ENCODE measurements at regions of chr6 and their contacts with region 1.

Region 1: GRCh38 chr6:106325336-106326178 is at the start of gene ATG5:
- DNase-seq: peak; percentile 98 to 100 (median 100)
- ATAC-seq: peak; percentile 92
- H3K4me3 ChIP-seq: peak within 1 kb of the TSS; percentile 92
- H3K4me3 Mint-ChIP-seq: peak within 1 kb of the TSS; percentile 99
- H3K27ac ChIP-seq: peak within 1 kb of the TSS; percentile 85 to 91
- H3K27ac Mint-ChIP-seq: peak within 1 kb of the TSS; percentile 96
- H3K4me1 ChIP-seq: peaks cover 22% of the 10 kb centered on the region
- H3K4me1 Mint-ChIP-seq: peaks cover 50% of the 10 kb centered on the region
- H3K27me3 ChIP-seq: peaks cover 0 to 12% of the 10 kb centered on the region in 2 experiments
- H3K27me3 Mint-ChIP-seq: peaks cover 19% of the 10 kb centered on the region
- CTCF ChIP-seq: no peak
- total RNA-seq, gene ATG5: 19.4 to 23.2 TPM

Region 2: GRCh38 chr6:105992315-105992961 is 333.1 kb before region 1 on chr6:
- CTCF ChIA-PET with region 1: no interaction called
- POLR2A ChIA-PET with region 1: interaction called, 12 read pairs
- intact Hi-C with region 1: loop called in 1 of 2 experiments (anchors 2 kb)
- DNase-seq: peak; percentile 76 to 96 (median 86)
- ATAC-seq: peak; percentile 89
- H3K4me3 ChIP-seq: peak overlapping the region; percentile 86
- H3K4me3 Mint-ChIP-seq: peak overlapping the region; percentile 92
- H3K27ac ChIP-seq: peak overlapping the region; percentile 66 to 71
- H3K27ac Mint-ChIP-seq: peak overlapping the region; percentile 83
- H3K4me1 ChIP-seq: peaks cover 41% of the 10 kb centered on the region
- H3K4me1 Mint-ChIP-seq: peaks cover 37% of the 10 kb centered on the region
- H3K27me3 ChIP-seq: peaks cover 14 to 54% of the 10 kb centered on the region in 2 experiments
- H3K27me3 Mint-ChIP-seq: peaks cover 87% of the 10 kb centered on the region
- CTCF ChIP-seq: no peak

Region 3: DNA sequence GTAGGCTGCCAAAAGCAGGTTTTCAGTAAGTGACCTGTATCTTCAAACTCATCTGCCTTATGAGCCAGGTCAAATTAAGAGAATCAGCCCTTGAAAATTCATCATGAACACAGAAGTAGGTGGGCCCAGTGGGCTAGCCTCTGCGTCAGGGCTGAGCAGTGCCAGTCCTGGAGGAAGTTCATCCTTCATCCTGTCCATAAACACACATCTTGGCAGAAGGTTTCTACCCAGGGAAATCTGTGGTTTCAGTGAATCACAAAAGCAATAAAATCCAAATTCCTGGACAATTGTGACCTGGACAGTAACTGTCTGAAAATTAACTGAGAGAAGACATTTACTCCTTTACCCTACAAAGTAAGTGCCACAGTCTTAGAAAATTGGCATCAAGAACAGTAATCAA is 72.4 kb before region 1 on chr6:
- CTCF ChIA-PET with region 1: no interaction called
- POLR2A ChIA-PET with region 1: no interaction called
- intact Hi-C with region 1: no loop called
- DNase-seq: no peak
- ATAC-seq: no peak
- H3K4me3 ChIP-seq: no peak overlapping the region
- H3K4me3 Mint-ChIP-seq: no peak overlapping the region
- H3K27ac ChIP-seq: no peak overlapping the region
- H3K27ac Mint-ChIP-seq: no peak overlapping the region
- H3K4me1 ChIP-seq: no peaks in the 10 kb centered on the region
- H3K4me1 Mint-ChIP-seq: peaks cover 32% of the 10 kb centered on the region
- H3K27me3 ChIP-seq: no peaks in the 10 kb centered on the region
- H3K27me3 Mint-ChIP-seq: no peaks in the 10 kb centered on the region
- CTCF ChIP-seq: no peak

Region 4: DNA sequence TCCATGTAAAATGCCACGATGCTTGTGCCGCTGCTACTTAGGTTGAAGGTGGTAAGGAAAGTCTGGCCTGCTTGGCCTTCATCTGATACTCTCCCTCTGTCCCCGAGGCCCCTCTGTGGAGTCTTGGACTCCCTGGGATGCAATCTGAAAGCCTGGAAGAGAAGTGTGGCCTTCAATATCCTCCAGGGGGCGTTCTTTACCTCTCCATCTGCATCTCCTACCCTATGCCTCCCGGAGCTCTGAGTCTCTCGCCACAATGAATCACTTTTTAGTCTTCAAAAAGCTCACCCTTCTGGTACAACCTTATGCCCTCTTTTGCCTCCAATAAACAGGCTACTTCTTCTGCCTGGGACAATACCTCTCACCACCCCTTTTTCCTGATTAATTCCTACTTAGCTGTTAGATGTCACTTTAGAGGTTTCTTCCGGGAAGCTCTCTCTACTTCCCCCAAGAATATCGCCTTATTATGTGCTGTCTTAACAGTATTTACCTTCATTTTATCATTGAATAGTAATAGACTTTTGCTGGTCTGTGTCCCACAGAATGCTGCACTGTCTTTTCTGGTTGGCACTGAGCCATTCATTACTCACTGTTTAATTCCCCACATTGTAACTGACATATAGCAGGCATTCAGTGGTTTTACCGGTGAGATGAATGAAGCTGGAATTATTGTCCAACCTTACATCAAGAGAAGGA is 13.9 kb after region 1 on chr6:
- CTCF ChIA-PET with region 1: interaction called, 13 read pairs
- POLR2A ChIA-PET with region 1: interaction called, 16 read pairs
- intact Hi-C with region 1: no loop called
- DNase-seq: peak in 12 of 14 experiments; percentile 4 to 74 (median 32)
- ATAC-seq: peak; percentile 80
- H3K4me3 ChIP-seq: no peak overlapping the region
- H3K4me3 Mint-ChIP-seq: no peak overlapping the region
- H3K27ac ChIP-seq: no peak overlapping the region
- H3K27ac Mint-ChIP-seq: no peak overlapping the region
- H3K4me1 ChIP-seq: peaks cover 3% of the 10 kb centered on the region
- H3K4me1 Mint-ChIP-seq: no peaks in the 10 kb centered on the region
- H3K27me3 ChIP-seq: peaks cover 5 to 8% of the 10 kb centered on the region in 2 experiments
- H3K27me3 Mint-ChIP-seq: peaks cover 52% of the 10 kb centered on the region
- CTCF ChIP-seq: peak; percentile 73

Region 5: GRCh38 chr6:107033126-107033525 is 707.6 kb after region 1 on chr6:
- CTCF ChIA-PET with region 1: no interaction called
- POLR2A ChIA-PET with region 1: no interaction called
- intact Hi-C with region 1: loop called in 1 of 2 experiments (anchors 2 kb)
- DNase-seq: no peak
- ATAC-seq: no peak
- H3K4me3 ChIP-seq: no peak overlapping the region
- H3K4me3 Mint-ChIP-seq: no peak overlapping the region
- H3K27ac ChIP-seq: no peak overlapping the region
- H3K27ac Mint-ChIP-seq: no peak overlapping the region
- H3K4me1 ChIP-seq: peaks cover 22% of the 10 kb centered on the region
- H3K4me1 Mint-ChIP-seq: peaks cover 45% of the 10 kb centered on the region
- H3K27me3 ChIP-seq: no peaks in the 10 kb centered on the region
- H3K27me3 Mint-ChIP-seq: no peaks in the 10 kb centered on the region
- CTCF ChIP-seq: no peak

Measured in CD4-positive, alpha-beta T cell (primary cell).